K562 (cell line): ENCODE measurements at regions of chr9 and their contacts with region 1.

Region 1: GRCh38 chr9:7055201-7055903 is 297.6 kb downstream of the KDM4C start:
- DNase-seq: no peak
- ATAC-seq: no peak
- H3K4me3 ChIP-seq: no peak overlapping the region
- H3K27ac ChIP-seq: no peak overlapping the region
- H3K4me1 ChIP-seq: peaks cover 0 to 8% of the 10 kb centered on the region in 2 experiments; a peak in 3 of 5 replicates
- H3K27me3 ChIP-seq: no peaks in the 10 kb centered on the region
- CTCF ChIP-seq: no peak
- EP300 ChIP-seq: no peak
- POLR2A ChIP-seq: no peak
- RAD21 ChIP-seq: no peak

Region 2: GRCh38 chr9:6827439-6827838 is 227.9 kb before region 1 on chr9:
- CTCF ChIA-PET with region 1: no interaction called
- POLR2A ChIA-PET with region 1: no interaction called
- in situ Hi-C with region 1: no loop called
- intact Hi-C with region 1: loop called (anchors 10 kb)
- DNase-seq: peak; percentile 24 to 60 (median 34)
- ATAC-seq: peak; percentile 80
- H3K4me3 ChIP-seq: no peak overlapping the region
- H3K27ac ChIP-seq: no peak overlapping the region
- H3K4me1 ChIP-seq: no peaks in the 10 kb centered on the region; a peak in 2 of 5 replicates
- H3K27me3 ChIP-seq: no peaks in the 10 kb centered on the region
- CTCF ChIP-seq: peak in 2 of 3 experiments; percentile 50 to 61; a peak in 3 of 6 replicates
- EP300 ChIP-seq: no peak
- POLR2A ChIP-seq: no peak
- RAD21 ChIP-seq: peak; percentile 47 to 70

Region 3: GRCh38 chr9:6907772-6908381 is 147.5 kb before region 1 on chr9:
- CTCF ChIA-PET with region 1: interaction called, 3 read pairs
- POLR2A ChIA-PET with region 1: interaction called, 3 read pairs
- in situ Hi-C with region 1: no loop called
- intact Hi-C with region 1: loop called (anchors 1 kb)
- DNase-seq: peak in 3 of 4 experiments; percentile 12 to 46 (median 13)
- ATAC-seq: peak; percentile 59
- H3K4me3 ChIP-seq: no peak overlapping the region
- H3K27ac ChIP-seq: no peak overlapping the region
- H3K4me1 ChIP-seq: no peaks in the 10 kb centered on the region; a peak in 2 of 5 replicates
- H3K27me3 ChIP-seq: no peaks in the 10 kb centered on the region
- CTCF ChIP-seq: peak in 2 of 3 experiments; percentile 37 to 77; a peak in 4 of 6 replicates
- EP300 ChIP-seq: no peak
- POLR2A ChIP-seq: no peak
- RAD21 ChIP-seq: peak; percentile 44 to 70; a peak in 3 of 4 replicates

Region 4: DNA sequence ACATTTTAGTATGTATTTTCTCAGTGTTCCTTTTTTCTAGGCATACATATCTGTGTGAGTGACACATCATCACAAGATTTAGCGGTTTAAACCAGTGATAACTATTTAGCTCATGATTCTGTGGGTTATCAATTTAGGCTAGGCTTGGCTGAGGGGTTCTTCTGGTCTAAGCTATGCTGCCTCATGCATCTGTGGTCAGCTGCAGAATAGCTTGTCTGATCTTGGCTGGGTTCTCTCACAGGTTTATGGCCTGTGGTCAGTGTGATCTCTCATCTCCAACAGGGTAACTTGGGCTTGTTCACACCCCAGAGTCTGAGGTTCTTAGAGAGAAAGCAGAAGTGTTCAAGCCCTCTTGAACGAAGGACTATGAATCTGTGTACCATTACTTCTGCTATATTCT is 65.7 kb after region 1 on chr9:
- CTCF ChIA-PET with region 1: no interaction called
- POLR2A ChIA-PET with region 1: no interaction called
- in situ Hi-C with region 1: no loop called
- intact Hi-C with region 1: no loop called
- DNase-seq: peak; percentile 20 to 52 (median 26)
- ATAC-seq: peak; percentile 80
- H3K4me3 ChIP-seq: no peak overlapping the region
- H3K27ac ChIP-seq: no peak overlapping the region
- H3K4me1 ChIP-seq: peaks cover 0 to 4% of the 10 kb centered on the region in 2 experiments; a peak in 2 of 5 replicates
- H3K27me3 ChIP-seq: no peaks in the 10 kb centered on the region
- CTCF ChIP-seq: no peak
- EP300 ChIP-seq: no peak
- POLR2A ChIP-seq: no peak
- RAD21 ChIP-seq: no peak

Region 5: DNA sequence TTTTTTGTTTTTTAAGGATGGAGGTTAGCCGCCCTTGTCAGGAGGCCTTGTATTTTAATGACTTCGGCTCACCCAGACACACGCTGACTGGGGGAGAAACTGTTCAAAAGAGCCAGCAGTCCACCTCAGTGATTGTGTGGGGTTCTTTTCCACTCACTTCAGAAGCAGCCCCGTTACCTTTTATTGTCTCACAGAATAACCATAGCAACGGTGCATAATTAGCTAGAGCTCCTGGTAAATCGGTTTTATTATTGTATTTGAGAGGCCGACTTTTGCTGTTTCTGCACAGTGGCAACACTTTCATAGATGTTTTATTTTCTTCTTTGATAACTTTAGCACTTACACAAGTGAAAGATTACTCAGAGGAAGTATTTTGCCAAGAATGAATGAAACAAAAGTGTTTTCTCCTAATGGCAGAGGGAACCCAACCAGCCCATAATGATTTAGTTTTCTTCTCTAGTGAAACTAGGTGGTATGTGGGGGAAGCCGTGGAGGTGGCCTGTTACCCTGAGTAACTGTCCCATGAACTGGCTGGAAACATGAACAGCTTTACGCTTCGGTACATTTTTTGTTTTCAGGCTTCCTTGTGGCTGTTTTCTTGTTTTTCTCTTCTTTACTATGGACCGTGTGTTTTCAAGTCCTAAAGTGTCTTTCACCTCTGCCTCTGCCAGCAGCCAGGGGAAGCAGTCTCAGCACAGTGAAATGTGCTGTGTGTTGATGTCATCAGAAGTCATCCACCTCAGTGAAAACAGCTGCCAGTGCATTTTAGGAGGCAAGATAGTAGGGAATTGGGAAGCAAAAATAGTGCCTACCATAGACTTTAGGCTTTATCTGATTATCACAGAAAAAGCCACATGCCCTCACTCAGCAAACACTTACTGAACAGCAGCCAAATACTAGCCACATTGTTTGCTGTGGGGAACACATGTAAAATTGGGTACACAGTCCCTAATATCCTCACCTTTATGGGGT is 117.1 kb after region 1 on chr9:
- CTCF ChIA-PET with region 1: no interaction called
- POLR2A ChIA-PET with region 1: no interaction called
- in situ Hi-C with region 1: no loop called
- intact Hi-C with region 1: loop called (anchors 5 kb)
- DNase-seq: no peak
- ATAC-seq: peak; percentile 53
- H3K4me3 ChIP-seq: no peak overlapping the region
- H3K27ac ChIP-seq: peak overlapping the region; percentile 22; the same call in 1 of the 3 replicates
- H3K4me1 ChIP-seq: peaks cover 0 to 6% of the 10 kb centered on the region in 2 experiments; a peak in 3 of 5 replicates
- H3K27me3 ChIP-seq: no peaks in the 10 kb centered on the region
- CTCF ChIP-seq: no peak
- EP300 ChIP-seq: no peak
- POLR2A ChIP-seq: no peak
- RAD21 ChIP-seq: no peak

Region 6: GRCh38 chr9:7186175-7186574 is 130.8 kb after region 1 on chr9:
- CTCF ChIA-PET with region 1: no interaction called
- POLR2A ChIA-PET with region 1: no interaction called
- in situ Hi-C with region 1: no loop called
- intact Hi-C with region 1: loop called (anchors 2 kb)
- DNase-seq: peak; percentile 11 to 38 (median 25)
- ATAC-seq: peak; percentile 59; the same call in 2 of the 3 replicates
- H3K4me3 ChIP-seq: no peak overlapping the region
- H3K27ac ChIP-seq: no peak overlapping the region
- H3K4me1 ChIP-seq: no peaks in the 10 kb centered on the region
- H3K27me3 ChIP-seq: no peaks in the 10 kb centered on the region
- CTCF ChIP-seq: peak; percentile 55 to 67 (median 59)
- EP300 ChIP-seq: no peak
- POLR2A ChIP-seq: no peak
- RAD21 ChIP-seq: peak; percentile 25 to 70; a peak in 2 of 4 replicates

Region 7: GRCh38 chr9:7259544-7260241 is 204.3 kb after region 1 on chr9:
- CTCF ChIA-PET with region 1: no interaction called
- POLR2A ChIA-PET with region 1: no interaction called
- in situ Hi-C with region 1: no loop called
- intact Hi-C with region 1: loop called (anchors 1 kb)
- DNase-seq: peak in 1 of 4 experiments; percentile 4
- ATAC-seq: no peak
- H3K4me3 ChIP-seq: no peak overlapping the region
- H3K27ac ChIP-seq: no peak overlapping the region
- H3K4me1 ChIP-seq: no peaks in the 10 kb centered on the region
- H3K27me3 ChIP-seq: no peaks in the 10 kb centered on the region; a peak in 1 of 5 replicates
- CTCF ChIP-seq: peak; percentile 16 to 24 (median 17); a peak in 1 of 6 replicates
- EP300 ChIP-seq: no peak
- POLR2A ChIP-seq: no peak
- RAD21 ChIP-seq: peak; percentile 7 to 15; a peak in 1 of 4 replicates

Region 8: DNA sequence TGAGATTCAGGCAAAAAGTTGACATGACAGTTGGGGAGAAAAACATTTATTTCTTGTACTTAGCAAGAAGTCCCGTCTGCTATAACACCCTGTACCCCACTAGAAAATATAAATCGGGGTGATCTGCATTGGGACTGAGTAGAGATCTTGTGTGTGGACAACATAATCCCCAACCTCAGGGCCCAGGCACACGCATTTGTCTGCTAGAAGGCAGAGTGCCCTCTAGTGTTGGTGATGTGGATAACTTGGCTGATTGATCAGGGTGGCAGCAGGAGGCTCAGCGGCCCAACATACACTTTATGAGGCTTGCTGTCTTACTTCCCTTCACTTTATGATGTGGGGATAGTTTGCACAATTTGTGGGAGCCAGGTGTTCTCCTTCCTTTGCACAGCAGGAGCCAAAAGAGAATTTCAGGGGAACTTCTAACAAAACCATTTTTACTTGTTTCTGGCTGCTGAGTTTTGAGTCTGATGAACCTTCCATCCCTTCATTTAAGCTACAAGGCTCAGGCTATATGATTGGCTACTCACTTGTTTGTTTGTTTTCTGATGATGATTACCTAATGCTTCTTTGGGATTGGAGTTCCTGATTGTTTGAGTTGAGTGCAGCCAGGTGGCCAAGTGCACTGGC is 481.1 kb after region 1 on chr9:
- CTCF ChIA-PET with region 1: no interaction called
- POLR2A ChIA-PET with region 1: no interaction called
- in situ Hi-C with region 1: no loop called
- intact Hi-C with region 1: loop called (anchors 2 kb)
- DNase-seq: peak; percentile 27 to 45 (median 34)
- ATAC-seq: peak; percentile 81
- H3K4me3 ChIP-seq: no peak overlapping the region
- H3K27ac ChIP-seq: no peak overlapping the region
- H3K4me1 ChIP-seq: no peaks in the 10 kb centered on the region
- H3K27me3 ChIP-seq: no peaks in the 10 kb centered on the region
- CTCF ChIP-seq: peak; percentile 56 to 57 (median 57)
- EP300 ChIP-seq: no peak
- POLR2A ChIP-seq: no peak
- RAD21 ChIP-seq: peak; percentile 32 to 58; a peak in 3 of 4 replicates